Activated naive CD4-positive, alpha-beta T cell treated with anti-CD3 and anti-CD28 coated beads for 36 hours (primary cell): ENCODE measurements at regions of chr2 and their contacts with region 1.

Region 1: DNA sequence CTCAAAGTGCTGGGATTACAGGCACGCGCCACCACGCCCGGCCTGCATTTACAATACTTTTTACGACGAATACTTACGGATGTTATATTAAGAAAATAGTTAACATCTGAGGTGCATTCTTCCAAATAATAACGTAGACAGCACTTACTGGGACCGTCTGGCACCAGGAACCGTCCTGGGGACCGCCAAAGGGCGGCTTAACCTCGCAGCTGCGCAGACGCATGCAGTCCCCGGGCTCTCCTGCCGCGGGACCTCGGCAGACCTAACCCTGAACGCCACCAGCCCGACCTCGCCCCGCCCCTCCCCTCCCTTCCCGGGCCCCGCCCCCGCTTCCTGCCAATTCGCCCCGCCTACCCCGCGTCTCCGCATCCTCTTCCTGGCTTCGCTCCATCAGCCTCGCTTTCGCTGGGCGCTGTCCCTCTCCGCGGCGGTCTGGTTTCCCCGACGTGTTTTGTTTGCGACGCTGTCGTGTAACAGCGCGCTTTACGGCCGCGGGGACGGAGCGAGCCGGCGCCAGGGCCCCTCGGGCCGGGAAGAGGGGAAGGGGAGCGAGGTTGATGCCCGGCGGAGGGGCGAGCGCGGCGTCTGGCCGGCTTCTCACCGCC is at the start of gene CNOT11:
- DNase-seq: peak; percentile 99
- H3K4me3 Mint-ChIP-seq: peak within 1 kb of the TSS; percentile 98
- H3K27ac Mint-ChIP-seq: peak within 1 kb of the TSS; percentile 93
- H3K4me1 Mint-ChIP-seq: peaks cover 39% of the 10 kb centered on the region
- H3K27me3 Mint-ChIP-seq: no peaks in the 10 kb centered on the region
- total RNA-seq, gene CNOT11: 38.3 to 40.3 TPM

Region 2: DNA sequence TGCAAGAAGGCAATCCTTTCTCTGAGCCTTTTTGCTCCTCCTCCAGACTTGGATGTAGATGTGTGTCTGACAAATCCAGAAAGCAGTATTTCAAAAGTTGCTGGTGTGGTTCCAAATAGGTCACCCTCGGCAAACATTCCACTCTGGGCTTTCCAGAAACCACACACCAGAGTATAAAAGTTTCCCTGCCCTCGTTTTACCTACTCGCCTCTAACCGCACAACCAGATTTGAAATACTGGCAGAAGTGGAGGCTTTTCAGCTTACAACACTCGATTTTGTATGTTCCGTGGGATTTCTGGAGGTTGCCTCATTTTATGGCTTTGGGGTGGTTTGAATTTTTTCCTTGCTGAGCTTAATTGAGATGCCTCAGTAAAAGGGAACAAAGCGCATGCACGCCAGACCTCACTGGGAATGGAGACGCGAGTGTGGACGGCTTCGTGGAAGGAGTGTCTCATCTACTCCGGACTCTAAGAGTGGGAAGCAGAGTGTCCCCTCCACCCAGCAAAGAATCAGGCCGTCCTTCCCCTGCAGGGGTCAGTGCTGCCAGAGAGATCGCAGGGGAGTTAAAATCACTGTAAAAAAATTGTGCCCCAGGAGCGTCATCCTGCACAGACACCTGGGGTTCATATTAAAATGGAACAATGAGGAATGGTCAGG is 294.4 kb before region 1 on chr2:
- CTCF ChIA-PET with region 1: no interaction called
- intact Hi-C with region 1: no loop called
- DNase-seq: no peak
- H3K4me3 Mint-ChIP-seq: no peak overlapping the region
- H3K27ac Mint-ChIP-seq: no peak overlapping the region
- H3K4me1 Mint-ChIP-seq: peaks cover 7% of the 10 kb centered on the region
- H3K27me3 Mint-ChIP-seq: no peaks in the 10 kb centered on the region

Region 3: DNA sequence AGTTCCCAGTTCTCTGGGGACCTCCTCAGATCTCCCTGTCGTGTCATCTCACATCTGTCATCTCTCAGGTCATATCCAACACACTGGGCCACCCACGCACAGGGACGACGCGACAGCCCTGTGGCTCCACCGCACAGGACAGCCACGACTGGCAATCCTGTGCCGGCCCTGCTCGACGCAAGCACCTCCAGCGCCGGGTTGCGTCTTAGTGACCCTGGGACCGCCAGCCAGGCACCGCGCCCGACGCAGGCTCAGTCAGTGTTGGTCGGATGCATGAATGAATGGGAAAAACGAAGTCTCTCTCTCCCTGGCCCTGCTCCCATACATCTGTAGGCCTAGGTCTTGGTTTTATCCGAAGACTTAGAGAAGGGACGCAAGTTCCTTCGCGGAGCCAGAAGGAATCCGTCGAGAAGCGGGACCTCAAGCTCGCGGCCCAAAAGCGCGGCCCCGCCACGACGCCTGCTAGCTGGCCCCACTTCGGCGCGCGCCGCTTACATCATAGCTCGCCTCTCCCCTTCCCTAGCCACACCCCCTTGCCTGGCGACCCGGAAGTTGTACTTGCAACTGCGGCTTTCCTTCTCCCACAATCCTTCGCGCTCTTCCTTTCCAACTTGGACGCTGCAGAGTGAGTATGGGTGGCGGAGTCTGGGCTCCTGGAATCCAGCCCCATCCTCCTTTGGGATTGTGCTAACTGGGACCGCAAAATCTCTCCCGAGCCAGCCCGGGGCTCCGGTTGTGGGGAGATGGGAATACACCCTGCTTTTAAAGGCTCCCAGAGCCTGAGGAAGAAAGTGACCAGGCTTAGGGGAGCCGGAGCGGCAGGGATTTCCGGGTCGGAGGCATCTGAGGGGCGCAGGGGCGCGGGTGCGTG is 250.6 kb before region 1 on chr2 and contains the start of gene RPL31:
- CTCF ChIA-PET with region 1: no interaction called
- intact Hi-C with region 1: loop called (anchors 1 kb)
- DNase-seq: peak; percentile 99
- H3K4me3 Mint-ChIP-seq: peak within 1 kb of the TSS; percentile 99
- H3K27ac Mint-ChIP-seq: peak within 1 kb of the TSS; percentile 94
- H3K4me1 Mint-ChIP-seq: peaks cover 46% of the 10 kb centered on the region
- H3K27me3 Mint-ChIP-seq: no peaks in the 10 kb centered on the region
- total RNA-seq, gene RPL31: 2,225 to 2,255 TPM

Region 4: DNA sequence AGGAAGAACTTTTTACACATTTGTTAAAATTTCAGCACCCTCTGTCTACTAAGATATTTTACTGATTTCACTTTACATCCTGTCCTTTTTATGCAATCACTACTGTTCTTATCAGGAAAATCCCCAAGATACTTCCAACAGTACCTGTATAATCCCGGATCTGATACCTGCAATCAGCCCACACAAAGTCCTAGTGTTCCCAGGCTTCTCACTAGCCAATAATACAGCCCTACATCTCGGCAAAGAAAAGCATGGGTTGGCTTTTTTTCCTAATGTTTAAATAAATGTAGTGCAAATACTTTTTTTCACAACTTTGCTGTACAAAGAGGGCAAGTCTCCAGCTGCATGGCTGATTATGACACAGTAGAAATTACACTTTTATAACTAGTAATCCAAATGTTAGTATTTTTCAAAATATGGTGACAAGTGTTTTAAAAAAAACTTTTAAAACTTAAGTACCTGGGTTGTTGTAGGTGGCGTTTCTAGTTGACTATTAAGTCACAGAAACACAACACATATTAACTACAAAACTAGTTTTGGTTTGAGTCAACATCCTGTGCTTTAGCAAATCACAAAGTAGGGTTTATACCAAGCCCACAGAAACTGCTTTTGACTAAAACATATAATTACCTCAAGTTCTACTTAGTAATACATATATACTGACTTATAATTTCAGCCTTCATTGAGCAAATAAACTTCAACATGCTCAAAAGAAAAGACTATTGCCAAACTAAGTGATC is 19.7 kb after region 1 on chr2:
- CTCF ChIA-PET with region 1: interaction called, 4 read pairs
- intact Hi-C with region 1: loop called (anchors 1 kb)
- DNase-seq: no peak
- H3K4me3 Mint-ChIP-seq: no peak overlapping the region
- H3K27ac Mint-ChIP-seq: peak overlapping the region; percentile 25
- H3K4me1 Mint-ChIP-seq: peaks cover 38% of the 10 kb centered on the region
- H3K27me3 Mint-ChIP-seq: no peaks in the 10 kb centered on the region

Region 5: DNA sequence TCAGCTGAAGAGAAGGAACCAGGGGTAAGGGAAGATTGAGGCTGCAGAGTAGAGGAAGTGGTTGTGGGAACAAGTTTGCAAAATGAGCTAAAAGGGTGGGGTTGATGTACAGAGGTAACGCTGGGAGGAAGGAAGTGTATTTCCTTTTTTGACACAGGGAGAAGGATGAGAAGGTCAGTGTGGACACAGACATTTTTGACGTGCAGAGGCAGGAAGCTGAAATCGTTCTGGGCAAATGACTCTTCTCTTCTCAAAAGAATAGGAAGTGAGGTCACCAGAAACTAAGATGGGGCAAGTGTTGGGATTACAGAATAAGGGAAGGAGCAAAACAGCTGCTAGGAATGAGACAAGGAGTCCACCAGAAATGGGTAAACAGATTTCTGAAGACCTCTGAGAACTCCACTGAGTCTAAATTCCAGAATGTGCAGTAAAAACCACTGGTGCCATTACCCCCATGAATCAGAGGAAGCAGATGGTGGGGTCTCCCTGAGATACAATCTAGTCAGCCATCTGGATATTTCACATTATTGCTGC is 76.0 kb after region 1 on chr2:
- CTCF ChIA-PET with region 1: interaction called, 3 read pairs
- intact Hi-C with region 1: loop called (anchors 1 kb)
- DNase-seq: peak; percentile 60
- H3K4me3 Mint-ChIP-seq: no peak overlapping the region
- H3K27ac Mint-ChIP-seq: no peak overlapping the region
- H3K4me1 Mint-ChIP-seq: peaks cover 18% of the 10 kb centered on the region
- H3K27me3 Mint-ChIP-seq: no peaks in the 10 kb centered on the region